BJ (cell line): ENCODE measurements at regions of chr20 and their contacts with region 1.

Region 1: GRCh38 chr20:33666293-33667244 is at the start of gene ACTL10:
- DNase-seq: peak; percentile 91
- H3K4me3 ChIP-seq: peak within 1 kb of the TSS; percentile 46
- H3K27me3 ChIP-seq: no peaks in the 10 kb centered on the region
- CTCF ChIP-seq: peak; percentile 68
- polyA plus RNA-seq, gene ACTL10: 0.44 and 0.67 TPM in 2 replicates

Region 2: DNA sequence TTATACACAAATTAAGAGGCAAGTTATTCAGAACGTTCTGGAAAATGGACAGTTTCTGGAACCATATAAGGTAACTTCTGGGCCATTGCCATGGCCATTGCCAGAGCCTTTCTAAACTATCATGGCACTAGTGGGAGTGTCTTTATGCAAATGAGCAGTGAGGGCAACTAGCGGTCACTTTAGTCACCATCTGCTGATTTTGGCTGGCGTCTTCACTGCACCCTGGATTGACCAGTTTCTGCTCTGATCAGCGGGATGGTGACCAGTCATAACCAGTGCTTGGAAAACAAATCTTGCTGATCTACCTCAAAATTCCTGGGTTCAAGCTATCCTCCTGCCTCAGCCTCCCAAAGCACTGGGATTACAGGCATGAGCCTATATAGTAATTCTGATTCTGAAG is 215.7 kb before region 1 on chr20:
- CTCF ChIA-PET with region 1: interaction called, 13 read pairs
- POLR2A ChIA-PET with region 1: no interaction called
- DNase-seq: no peak
- H3K4me3 ChIP-seq: no peak overlapping the region
- H3K27me3 ChIP-seq: no peaks in the 10 kb centered on the region
- CTCF ChIP-seq: no peak

Region 3: DNA sequence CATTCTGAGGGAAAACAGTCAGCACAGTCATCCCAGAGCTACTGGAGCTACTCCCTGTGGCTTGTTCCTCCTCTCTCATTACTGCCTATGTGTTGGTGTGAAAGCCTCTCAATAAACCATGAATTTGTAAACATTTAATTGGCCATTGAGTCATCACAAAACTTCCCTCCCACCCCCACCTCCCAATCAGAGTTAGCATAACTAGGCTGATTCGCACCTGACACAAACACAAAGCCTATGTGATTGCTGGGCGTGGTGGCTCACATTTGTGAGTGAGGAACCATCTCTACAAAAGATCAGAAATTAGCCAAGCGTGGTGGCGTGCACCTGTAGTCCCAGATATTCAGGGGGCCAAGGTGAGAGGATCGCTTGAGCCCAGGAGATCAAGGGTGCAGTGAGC is 205.9 kb before region 1 on chr20:
- CTCF ChIA-PET with region 1: interaction called, 21 read pairs
- POLR2A ChIA-PET with region 1: no interaction called
- DNase-seq: no peak
- H3K4me3 ChIP-seq: no peak overlapping the region
- H3K27me3 ChIP-seq: 0 out of 2 replicates have a peak, but pooled peaks cover 1% of the 10 kb centered on the region
- CTCF ChIP-seq: no peak

Region 4: GRCh38 chr20:33653218-33653899 is 13.2 kb before region 1 on chr20:
- CTCF ChIA-PET with region 1: interaction called, 18 read pairs
- POLR2A ChIA-PET with region 1: no interaction called
- DNase-seq: peak; percentile 17
- H3K4me3 ChIP-seq: no peak overlapping the region
- H3K27me3 ChIP-seq: no peaks in the 10 kb centered on the region
- CTCF ChIP-seq: peak; percentile 90

Region 5: DNA sequence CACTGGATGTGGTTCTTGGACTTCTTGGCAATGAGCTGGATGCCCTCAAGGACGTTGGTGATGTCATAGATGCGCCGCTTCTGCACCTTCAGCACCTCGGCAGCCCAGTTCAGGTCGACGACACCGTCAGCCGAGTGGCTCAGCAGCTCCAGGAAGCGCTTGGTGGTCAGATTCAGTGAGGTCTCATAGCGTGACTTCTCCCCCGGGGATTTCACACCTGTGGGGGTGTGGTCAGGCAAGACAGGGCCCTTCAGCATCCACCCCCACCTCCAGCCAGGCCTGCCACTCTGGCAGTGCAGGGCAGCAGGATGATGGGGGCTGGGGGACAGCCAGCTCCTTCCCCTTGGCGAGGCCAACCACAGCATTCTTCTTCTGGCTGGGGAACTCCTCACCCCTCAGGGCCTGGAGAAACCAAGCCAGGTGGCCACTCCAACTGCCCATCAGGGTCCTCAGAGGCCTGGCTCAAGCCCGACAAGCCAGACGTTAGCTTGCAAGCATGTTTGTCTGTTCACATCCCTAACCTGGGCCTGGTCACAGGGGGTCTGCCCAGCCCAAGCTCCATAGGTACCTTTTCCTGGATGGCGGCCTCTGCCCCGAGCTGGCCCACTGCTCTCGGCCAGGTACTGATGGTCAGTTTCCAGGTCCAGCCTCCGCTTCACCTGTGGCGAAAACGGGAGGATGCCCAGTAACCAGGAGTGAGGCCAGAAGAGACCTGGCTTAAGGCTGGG is 13.4 kb after region 1 on chr20:
- CTCF ChIA-PET with region 1: interaction called, 16 read pairs
- POLR2A ChIA-PET with region 1: interaction called, 5 read pairs
- DNase-seq: no peak
- H3K4me3 ChIP-seq: no peak overlapping the region
- H3K27me3 ChIP-seq: no peaks in the 10 kb centered on the region
- CTCF ChIP-seq: no peak